Transverse colon (tissue), 4 donors: ENCODE measurements at regions of chr10 and their contacts with region 1.

Region 1: GRCh38 chr10:77641788-77642397 is 4.3 kb upstream of the KCNMA1 start:
- DNase-seq: peak; percentile 64
- H3K4me3 ChIP-seq: no peak overlapping the region
- H3K27ac ChIP-seq: no peak overlapping the region
- H3K4me1 ChIP-seq: peaks cover 3 to 12% (median 9%) of the 10 kb centered on the region in 4 donors
- H3K27me3 ChIP-seq: peaks cover 45% of the 10 kb centered on the region
- CTCF ChIP-seq: peak; percentile 86 to 95 (median 88)
- EP300 ChIP-seq: no peak
- POLR2A ChIP-seq: no peak

Region 2: DNA sequence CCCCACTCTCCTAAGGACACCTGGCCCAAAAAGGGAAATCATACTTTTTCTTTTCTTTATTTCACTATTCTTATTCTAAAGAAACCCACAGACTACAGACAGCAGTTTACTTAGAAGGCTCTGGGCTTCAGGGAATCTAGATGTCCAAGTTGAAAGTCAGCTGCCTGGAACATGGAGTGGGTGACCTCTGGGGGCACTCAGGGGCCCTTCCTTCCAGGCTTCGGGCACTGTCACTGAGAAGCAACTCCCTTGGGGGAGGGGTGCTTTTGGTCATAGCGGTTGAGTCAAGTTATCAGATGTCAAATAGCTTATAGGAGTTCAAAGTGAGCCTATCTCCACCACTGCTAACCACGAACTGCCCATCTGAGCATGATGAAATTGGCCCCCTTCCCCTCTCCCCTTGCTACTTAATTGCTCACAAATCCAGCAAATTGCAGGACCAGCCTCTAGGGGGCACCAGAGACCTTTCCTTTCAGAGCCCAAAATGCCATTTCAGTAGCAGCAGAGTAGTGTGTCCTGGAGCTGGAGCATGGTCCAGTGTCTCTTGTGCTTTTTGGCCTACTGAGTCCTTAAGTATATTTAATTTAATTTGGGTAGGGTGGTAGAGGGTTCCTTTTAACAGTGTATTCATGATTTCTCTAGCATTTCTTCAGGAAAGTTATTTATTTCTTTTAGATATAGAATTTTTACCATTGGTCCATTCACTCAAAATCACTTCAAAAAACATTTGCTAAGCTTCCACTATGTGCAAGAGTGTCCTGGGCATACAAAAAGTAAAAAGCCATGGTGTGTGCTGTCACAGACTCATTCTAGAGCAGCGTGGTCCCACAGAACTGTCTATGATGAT is 468.1 kb before region 1 on chr10:
- in situ Hi-C with region 1: loop called (anchors 5 kb)
- intact Hi-C with region 1: loop called (anchors 2 kb)
- DNase-seq: peak; percentile 80
- H3K4me3 ChIP-seq: no peak overlapping the region
- H3K27ac ChIP-seq: peak overlapping the region in 3 of 4 donors; percentile 20 to 62 (median 39)
- H3K4me1 ChIP-seq: peaks cover 0 to 4% (median 2%) of the 10 kb centered on the region in 4 donors
- H3K27me3 ChIP-seq: no peaks in the 10 kb centered on the region
- CTCF ChIP-seq: peak; percentile 85 to 93 (median 88)
- EP300 ChIP-seq: no peak
- POLR2A ChIP-seq: no peak

Region 3: DNA sequence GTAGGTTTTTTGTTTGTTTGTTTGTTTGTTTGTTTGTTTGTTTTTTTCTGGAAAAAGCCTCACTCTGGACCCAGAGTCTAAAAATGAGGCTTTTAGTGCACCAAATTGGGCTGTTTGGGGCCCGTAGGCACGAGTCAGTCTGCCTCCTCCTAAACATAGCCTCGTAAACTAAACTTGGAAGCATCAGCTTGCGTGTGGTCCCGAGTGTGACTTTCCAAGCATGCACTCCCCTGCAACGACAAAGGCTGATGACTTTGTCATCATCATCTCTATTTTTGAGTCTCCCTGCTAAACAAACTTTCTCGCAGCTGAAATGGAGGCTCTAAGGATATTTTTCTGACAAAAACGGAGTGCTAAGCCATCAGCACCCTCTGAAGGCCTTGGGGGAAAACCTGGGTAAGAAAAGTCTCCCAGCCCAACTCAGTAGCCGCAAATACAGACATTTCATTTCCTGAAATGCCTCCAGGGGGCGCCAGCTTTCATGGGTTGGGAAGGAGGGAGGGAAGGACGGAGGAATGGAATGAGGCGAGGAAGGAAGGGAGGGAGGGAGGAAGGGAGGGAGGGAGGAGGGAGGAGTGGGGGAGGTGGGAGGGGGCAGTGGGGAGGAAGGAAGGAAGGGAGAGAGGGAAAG is 250.2 kb before region 1 on chr10:
- in situ Hi-C with region 1: loop called in 3 of 4 experiments (anchors 5 to 10 kb)
- intact Hi-C with region 1: loop called (anchors 1 kb)
- DNase-seq: peak; percentile 83
- H3K4me3 ChIP-seq: no peak overlapping the region
- H3K27ac ChIP-seq: peak overlapping the region; percentile 33 to 82 (median 68)
- H3K4me1 ChIP-seq: peaks cover 5 to 30% (median 24%) of the 10 kb centered on the region in 4 donors
- H3K27me3 ChIP-seq: peaks cover 12% of the 10 kb centered on the region
- CTCF ChIP-seq: peak; percentile 60 to 69 (median 65)
- EP300 ChIP-seq: no peak
- POLR2A ChIP-seq: no peak

Region 4: GRCh38 chr10:77405771-77406241 is 236.1 kb before region 1 on chr10:
- in situ Hi-C with region 1: loop called in 1 of 4 experiments (anchors 25 kb)
- intact Hi-C with region 1: no loop called
- DNase-seq: peak; percentile 77
- H3K4me3 ChIP-seq: no peak overlapping the region
- H3K27ac ChIP-seq: peak overlapping the region; percentile 23 to 72 (median 52)
- H3K4me1 ChIP-seq: peaks cover 31 to 39% (median 36%) of the 10 kb centered on the region in 4 donors
- H3K27me3 ChIP-seq: no peaks in the 10 kb centered on the region
- CTCF ChIP-seq: no peak
- EP300 ChIP-seq: no peak
- POLR2A ChIP-seq: no peak

Region 5: GRCh38 chr10:77524281-77524711 is 117.6 kb before region 1 on chr10:
- in situ Hi-C with region 1: no loop called
- intact Hi-C with region 1: loop called (anchors 10 kb)
- DNase-seq: no peak
- H3K4me3 ChIP-seq: no peak overlapping the region
- H3K27ac ChIP-seq: peak overlapping the region; percentile 11 to 68 (median 60)
- H3K4me1 ChIP-seq: peaks cover 0 to 26% (median 4%) of the 10 kb centered on the region in 4 donors
- H3K27me3 ChIP-seq: no peaks in the 10 kb centered on the region
- CTCF ChIP-seq: no peak
- EP300 ChIP-seq: no peak
- POLR2A ChIP-seq: no peak